ENCODE measurements at regions of chr16 and their contacts with region 1.

Region 1: GRCh38 chr16:53130159-53131049 is 75.6 kb downstream of the CHD9 start:
- DNase-seq: peak; percentile 96 to 99 (median 96)
- ATAC-seq: peak; percentile 91
- H3K4me3 ChIP-seq: peak overlapping the region; percentile 86
- H3K27ac ChIP-seq: peak overlapping the region; percentile 92
- H3K4me1 ChIP-seq: peaks cover 23 to 26% of the 10 kb centered on the region in 2 experiments
- H3K27me3 ChIP-seq: no peaks in the 10 kb centered on the region
- CTCF ChIP-seq: peak; percentile 46 to 85 (median 75)
- EP300 ChIP-seq: no peak
- POLR2A ChIP-seq: peak; percentile 67
- RAD21 ChIP-seq: peak; percentile 83 to 86

Region 2: DNA sequence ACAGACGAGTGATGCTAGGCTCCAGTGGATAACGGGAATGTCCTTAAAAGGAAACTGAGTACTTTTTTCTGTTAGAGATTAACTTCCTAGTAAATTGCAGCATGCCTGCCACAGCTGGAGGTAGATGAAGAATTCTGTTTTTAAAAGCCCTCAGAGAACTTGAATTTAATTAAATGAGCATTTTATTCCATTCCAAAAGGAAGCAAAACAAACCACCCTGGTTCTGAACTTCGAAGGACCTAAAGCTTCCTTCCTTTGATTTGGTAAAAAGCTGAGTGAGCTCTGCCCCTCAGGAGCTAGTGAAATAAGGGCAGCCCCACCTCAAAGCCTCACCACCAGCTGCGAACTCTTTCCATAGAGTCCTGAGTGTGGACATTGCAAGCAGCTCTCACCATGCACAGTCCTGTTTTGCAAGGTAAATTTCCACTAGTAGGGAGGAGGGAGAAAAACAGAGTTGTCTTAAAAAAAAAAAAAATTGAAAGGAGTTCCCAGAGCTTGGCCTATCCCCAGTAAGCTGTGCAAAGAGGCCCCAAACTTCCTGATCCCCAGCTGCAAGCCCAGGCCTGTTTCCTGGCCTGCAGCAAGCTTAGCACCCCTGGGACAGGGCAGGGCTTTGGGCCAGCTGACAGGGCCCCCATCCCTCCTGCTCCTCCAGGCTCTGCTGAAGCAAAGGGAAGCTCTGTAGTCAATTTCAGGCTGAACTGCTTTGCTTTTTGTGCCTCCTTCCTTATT is 88.9 kb before region 1 on chr16:
- CTCF ChIA-PET with region 1: no interaction called
- POLR2A ChIA-PET with region 1: no interaction called
- in situ Hi-C with region 1: no loop called
- intact Hi-C with region 1: no loop called
- DNase-seq: no peak
- ATAC-seq: no peak
- H3K4me3 ChIP-seq: no peak overlapping the region
- H3K27ac ChIP-seq: no peak overlapping the region
- H3K4me1 ChIP-seq: no peaks in the 10 kb centered on the region
- H3K27me3 ChIP-seq: peaks cover 22 to 25% of the 10 kb centered on the region in 2 experiments; a peak in 4 of 5 replicates
- CTCF ChIP-seq: no peak
- EP300 ChIP-seq: no peak
- POLR2A ChIP-seq: no peak
- RAD21 ChIP-seq: no peak

Region 3: DNA sequence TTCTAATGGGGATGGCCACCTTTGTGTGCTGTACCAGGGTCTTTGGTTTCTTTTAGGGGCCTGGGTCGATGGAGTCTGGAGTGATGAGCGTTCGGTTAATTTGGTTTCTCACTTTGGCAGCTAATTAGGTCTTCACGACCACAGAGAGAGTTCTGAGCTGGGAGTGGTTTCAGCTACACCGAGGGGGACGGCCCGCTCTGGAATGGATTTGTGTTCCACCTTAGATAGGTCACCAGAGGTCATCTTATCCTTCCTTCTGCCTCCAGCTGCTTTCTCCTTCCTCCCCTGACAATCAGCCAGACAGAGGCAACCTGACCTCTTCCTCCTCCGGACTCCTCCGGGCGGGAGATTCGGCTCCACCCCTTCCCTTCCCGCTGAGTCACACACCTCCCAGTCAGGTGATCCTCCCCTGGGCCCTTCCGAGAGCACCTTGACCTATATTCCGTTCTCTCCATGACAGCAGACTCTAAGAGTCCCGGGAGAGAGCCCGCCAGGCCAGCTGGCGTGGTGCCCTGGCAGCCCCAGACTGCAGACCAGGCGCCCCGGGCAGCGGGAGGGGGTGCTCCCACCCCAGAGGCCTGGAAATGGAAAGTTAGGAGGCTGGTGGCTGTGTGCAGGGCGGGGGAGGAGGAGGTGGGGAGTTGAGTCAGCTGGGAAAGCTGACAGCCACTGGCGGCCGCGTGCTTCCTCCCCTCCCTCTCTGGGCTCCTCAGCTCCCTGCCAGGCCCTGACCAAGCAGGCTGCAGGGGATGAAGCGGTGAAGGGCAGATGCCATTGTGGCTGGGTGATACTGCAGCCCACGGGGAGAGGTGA is 30.9 kb before region 1 on chr16:
- CTCF ChIA-PET with region 1: no interaction called
- POLR2A ChIA-PET with region 1: interaction called, 7 read pairs
- in situ Hi-C with region 1: no loop called
- intact Hi-C with region 1: loop called (anchors 1 kb)
- DNase-seq: peak; percentile 89 to 96 (median 92)
- ATAC-seq: peak; percentile 95
- H3K4me3 ChIP-seq: peak overlapping the region; percentile 47
- H3K27ac ChIP-seq: peak overlapping the region; percentile 82
- H3K4me1 ChIP-seq: peaks cover 16 to 28% of the 10 kb centered on the region in 2 experiments
- H3K27me3 ChIP-seq: no peaks in the 10 kb centered on the region
- CTCF ChIP-seq: no peak
- EP300 ChIP-seq: peak; percentile 52
- POLR2A ChIP-seq: peak; percentile 57
- RAD21 ChIP-seq: no peak

Region 4: DNA sequence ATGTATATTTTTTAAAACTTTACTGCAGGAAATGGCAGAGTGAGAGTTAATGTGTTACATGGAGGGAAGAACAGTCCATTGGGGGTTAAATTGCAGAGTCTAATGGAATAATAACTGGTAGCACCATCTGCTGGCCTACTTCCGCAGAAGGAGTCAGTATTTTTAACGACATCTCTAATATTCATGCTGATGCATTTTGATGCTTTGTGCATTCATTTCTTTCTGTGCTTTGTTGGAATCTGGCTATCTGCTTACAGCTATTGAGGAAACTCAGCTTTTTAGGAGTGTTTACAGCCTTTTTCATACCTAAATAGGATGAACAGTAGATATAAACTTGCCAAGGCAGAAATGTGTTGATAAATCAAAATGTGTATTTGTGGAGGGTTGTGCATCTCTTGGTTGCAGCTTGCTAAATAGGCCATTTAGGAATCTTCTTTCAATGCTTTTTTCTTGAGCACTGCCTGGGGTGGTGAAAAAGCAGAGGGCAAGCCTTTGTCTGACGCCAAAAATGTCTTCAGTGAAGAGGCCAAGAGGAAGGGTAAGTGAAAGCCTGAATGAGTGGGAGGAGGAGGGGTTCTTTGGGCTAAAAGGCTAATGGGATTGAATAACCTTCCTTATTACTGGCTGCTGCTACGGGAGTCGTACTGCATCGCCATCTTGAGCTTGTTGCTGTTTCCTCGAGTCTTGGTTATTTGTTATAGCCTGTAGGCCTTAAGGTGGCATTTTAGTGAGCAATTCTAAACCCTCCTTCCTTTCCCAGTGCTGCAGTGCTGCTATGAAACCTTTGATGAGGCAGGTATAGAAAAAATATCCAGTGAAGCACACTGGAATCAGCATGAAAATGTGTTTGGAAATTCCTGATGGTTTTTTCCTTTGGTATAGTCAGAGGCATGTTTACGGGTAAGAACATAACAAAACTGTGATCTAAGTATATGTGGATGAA is 77.7 kb after region 1 on chr16:
- CTCF ChIA-PET with region 1: interaction called, 4 read pairs
- POLR2A ChIA-PET with region 1: interaction called, 4 read pairs
- in situ Hi-C with region 1: no loop called
- intact Hi-C with region 1: loop called (anchors 1 kb)
- DNase-seq: peak; percentile 54 to 93 (median 77)
- ATAC-seq: peak; percentile 84
- H3K4me3 ChIP-seq: peak overlapping the region; percentile 58
- H3K27ac ChIP-seq: peak overlapping the region; percentile 99
- H3K4me1 ChIP-seq: peaks cover 0 to 6% of the 10 kb centered on the region in 2 experiments; a peak in 2 of 5 replicates
- H3K27me3 ChIP-seq: no peaks in the 10 kb centered on the region
- CTCF ChIP-seq: peak; percentile 61 to 77 (median 71)
- EP300 ChIP-seq: 0 out of 2 replicates have a peak, but pooled peaks have one; percentile 38
- POLR2A ChIP-seq: peak; percentile 80
- RAD21 ChIP-seq: peak; percentile 68 to 77

Region 5: GRCh38 chr16:53220585-53220984 is 90.2 kb after region 1 on chr16:
- CTCF ChIA-PET with region 1: interaction called, 5 read pairs
- POLR2A ChIA-PET with region 1: no interaction called
- in situ Hi-C with region 1: no loop called
- intact Hi-C with region 1: loop called (anchors 2 kb)
- DNase-seq: peak in 3 of 4 experiments; percentile 20 to 57 (median 33)
- ATAC-seq: peak; percentile 81
- H3K4me3 ChIP-seq: no peak overlapping the region
- H3K27ac ChIP-seq: no peak overlapping the region; the same call in 2 of the 3 replicates
- H3K4me1 ChIP-seq: peaks cover 7 to 38% of the 10 kb centered on the region in 2 experiments
- H3K27me3 ChIP-seq: no peaks in the 10 kb centered on the region
- CTCF ChIP-seq: peak; percentile 42 to 56 (median 51); a peak in 3 of 6 replicates
- EP300 ChIP-seq: no peak
- POLR2A ChIP-seq: no peak
- RAD21 ChIP-seq: peak; percentile 40 to 73

Region 6: GRCh38 chr16:53503270-53503923 is 373.0 kb after region 1 on chr16:
- CTCF ChIA-PET with region 1: interaction called, 3 read pairs
- POLR2A ChIA-PET with region 1: interaction called, 3 read pairs
- in situ Hi-C with region 1: no loop called
- intact Hi-C with region 1: loop called (anchors 10 kb)
- DNase-seq: peak; percentile 98 to 100 (median 99)
- ATAC-seq: peak; percentile 96
- H3K4me3 ChIP-seq: peak overlapping the region; percentile 72
- H3K27ac ChIP-seq: peak overlapping the region; percentile 60
- H3K4me1 ChIP-seq: peaks cover 7 to 16% of the 10 kb centered on the region in 2 experiments; a peak in 4 of 5 replicates
- H3K27me3 ChIP-seq: no peaks in the 10 kb centered on the region; a peak in 1 of 5 replicates
- CTCF ChIP-seq: 0 out of 6 replicates have a peak, but pooled peaks of 1 of the 3 experiments have one; percentile 3
- EP300 ChIP-seq: no peak
- POLR2A ChIP-seq: peak; percentile 83
- RAD21 ChIP-seq: no peak

Region 7: GRCh38 chr16:53781023-53781605 is 650.7 kb after region 1 on chr16:
- CTCF ChIA-PET with region 1: no interaction called
- POLR2A ChIA-PET with region 1: no interaction called
- in situ Hi-C with region 1: no loop called
- intact Hi-C with region 1: no loop called
- DNase-seq: no peak
- ATAC-seq: no peak
- H3K4me3 ChIP-seq: no peak overlapping the region
- H3K27ac ChIP-seq: no peak overlapping the region
- H3K4me1 ChIP-seq: no peaks in the 10 kb centered on the region
- H3K27me3 ChIP-seq: peaks cover 0 to 5% of the 10 kb centered on the region in 2 experiments; a peak in 2 of 5 replicates
- CTCF ChIP-seq: no peak
- EP300 ChIP-seq: no peak
- POLR2A ChIP-seq: no peak
- RAD21 ChIP-seq: no peak